ENCODE measurements at regions of chr15 and their contacts with region 1.

Region 1: DNA sequence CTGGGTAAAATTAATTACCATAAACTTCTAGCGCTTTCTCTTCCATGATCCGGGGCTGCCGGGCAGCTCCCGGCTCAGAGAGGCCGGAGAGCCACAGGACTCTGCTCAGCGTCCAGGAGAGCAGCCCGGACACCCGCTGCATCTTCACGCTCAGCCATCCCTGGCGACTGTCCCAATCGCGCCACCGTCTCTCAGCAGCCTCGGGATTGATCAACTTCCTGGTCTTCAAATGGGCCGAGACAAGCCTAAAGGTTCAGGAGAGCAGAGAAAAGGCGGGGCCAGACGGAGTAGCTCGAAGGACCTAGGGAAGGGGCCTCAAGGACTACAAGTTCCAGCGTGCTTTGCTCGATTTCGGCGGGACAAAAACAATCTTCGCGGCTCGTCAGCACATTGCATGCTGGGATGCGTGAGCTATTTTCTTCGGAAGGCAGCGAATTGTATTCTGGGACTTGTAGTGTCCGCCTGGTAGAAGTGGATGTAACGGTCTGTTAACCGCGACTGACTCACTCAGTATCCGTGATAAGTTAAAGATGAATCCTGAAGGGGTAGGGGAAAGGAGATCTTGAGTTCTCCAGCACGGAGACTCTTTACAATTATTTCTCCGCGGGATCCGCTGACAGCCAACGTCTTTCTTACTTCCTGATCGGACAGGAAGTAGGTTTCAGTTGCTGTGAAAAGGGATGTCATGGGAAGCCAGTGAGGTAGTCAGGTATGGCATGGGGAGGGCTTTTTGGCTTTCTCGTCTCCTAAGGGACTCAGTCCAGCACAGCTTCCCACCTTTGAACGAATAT is at the start of gene CIAO2A:
- DNase-seq: peak; percentile 95
- ATAC-seq: peak; percentile 89 to 91
- H3K4me3 ChIP-seq: peak within 1 kb of the TSS; percentile 72
- H3K27ac ChIP-seq: peak within 1 kb of the TSS; percentile 98
- H3K4me1 ChIP-seq: peaks cover 9% of the 10 kb centered on the region
- H3K27me3 ChIP-seq: no peaks in the 10 kb centered on the region
- total RNA-seq, gene CIAO2A: 43.9 to 66.2 (median 53.6) TPM

Region 2: GRCh38 chr15:63998489-63998888 is 95.3 kb before region 1 on chr15:
- intact Hi-C with region 1: no loop called
- DNase-seq: no peak
- ATAC-seq: peak; percentile 15 to 23
- H3K4me3 ChIP-seq: no peak overlapping the region
- H3K27ac ChIP-seq: peak overlapping the region; percentile 49
- H3K4me1 ChIP-seq: peaks cover 23% of the 10 kb centered on the region
- H3K27me3 ChIP-seq: no peaks in the 10 kb centered on the region

Region 3: DNA sequence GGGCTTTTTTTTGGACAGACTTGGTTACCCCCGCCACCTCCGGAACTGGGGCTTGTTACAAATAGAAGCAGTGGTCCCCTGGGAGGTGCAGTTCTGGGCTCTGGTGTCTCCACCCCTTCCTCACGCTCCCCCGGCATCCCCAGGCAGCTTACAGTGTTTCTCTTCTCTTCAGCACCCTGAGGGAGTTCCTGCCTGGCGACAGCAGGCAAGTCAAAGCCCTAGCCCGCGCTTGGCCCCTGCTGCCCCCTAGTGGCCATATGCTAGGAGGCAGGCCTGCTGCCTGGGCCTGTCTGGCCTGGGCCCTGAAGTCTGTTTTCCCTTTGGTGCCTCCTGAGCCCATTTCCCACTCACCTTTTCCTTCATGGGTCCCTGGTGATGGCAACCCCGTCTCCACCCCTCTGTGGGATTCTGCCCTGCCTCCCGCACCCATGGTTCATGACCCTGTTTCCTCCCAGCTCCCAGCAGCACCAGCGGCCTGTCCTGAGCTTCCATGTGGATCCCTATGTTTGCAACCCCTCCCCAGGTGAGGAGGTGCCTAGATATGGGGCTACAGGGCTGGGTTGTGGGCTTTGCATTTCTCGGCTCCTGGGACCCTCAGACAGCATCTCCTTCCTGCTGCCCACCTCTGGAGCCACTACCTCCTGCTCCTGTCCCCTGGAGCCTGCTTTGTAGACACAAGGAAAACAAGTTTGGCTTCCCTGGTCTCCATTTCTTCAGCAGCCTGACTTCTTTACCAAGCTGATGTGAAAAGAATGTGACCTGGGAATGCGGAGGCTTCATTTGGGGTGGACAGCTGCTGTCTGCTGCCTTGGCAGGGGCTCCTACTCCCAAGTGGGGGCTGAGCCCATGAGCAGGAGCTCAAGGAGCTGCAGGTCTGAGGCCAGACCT is 59.9 kb after region 1 on chr15:
- intact Hi-C with region 1: loop called in 2 of 4 experiments (anchors 5 kb)
- DNase-seq: peak; percentile 91 to 96 (median 96)
- ATAC-seq: peak; percentile 78 to 79
- H3K4me3 ChIP-seq: peak overlapping the region; percentile 9
- H3K27ac ChIP-seq: peak overlapping the region; percentile 79
- H3K4me1 ChIP-seq: peaks cover 10% of the 10 kb centered on the region
- H3K27me3 ChIP-seq: no peaks in the 10 kb centered on the region